Left colon (tissue), 2 donors: ENCODE measurements at regions of chr2 and their contacts with region 1.

Region 1: DNA sequence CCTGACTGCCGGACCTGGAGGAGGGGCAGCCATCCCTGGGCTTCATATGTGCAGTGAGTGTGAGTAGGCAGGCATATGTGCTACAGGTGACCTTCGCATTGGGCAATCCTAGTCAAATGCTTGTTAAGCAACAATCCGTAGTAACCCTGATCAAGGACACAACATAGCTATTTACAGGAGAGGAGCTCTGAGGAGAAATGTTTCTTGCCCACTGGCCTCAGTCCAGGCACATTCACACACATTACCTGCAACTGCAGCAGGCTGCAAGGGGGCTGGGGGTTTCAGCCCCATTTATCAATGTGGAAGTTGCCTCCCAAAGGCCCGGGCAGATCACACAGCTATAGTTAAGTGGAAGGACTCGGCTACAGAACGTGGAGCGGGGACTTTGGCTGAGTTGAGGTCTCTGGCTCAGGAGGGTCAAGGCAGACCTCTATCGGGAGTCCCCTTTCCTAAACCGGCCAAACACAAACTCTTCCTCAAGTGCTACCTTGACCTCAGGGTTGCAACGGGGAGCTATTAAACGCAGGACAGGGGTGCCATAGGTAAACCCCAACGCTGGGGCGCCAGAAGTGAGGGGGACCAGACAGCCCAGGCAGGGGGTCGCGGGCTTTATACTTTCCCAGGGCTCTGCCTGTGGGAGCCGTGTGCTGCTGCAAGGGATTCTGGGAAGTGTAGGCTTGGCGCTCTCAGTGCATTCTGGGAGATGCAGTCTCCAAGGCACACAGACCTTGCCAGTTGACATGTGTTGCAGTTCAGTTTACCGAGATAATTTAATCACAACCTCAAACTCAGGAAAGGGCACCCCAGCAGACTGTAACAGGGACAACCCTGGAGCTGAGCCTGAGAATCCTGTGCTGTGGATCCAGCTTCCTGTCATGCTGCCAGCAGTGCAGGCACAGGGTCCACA is 9.4 kb downstream of the KHK start:
- DNase-seq: peak in 1 of 2 donors; percentile 50
- ATAC-seq: peak; percentile 65

Region 2: GRCh38 chr2:27191053-27191829 is 95.2 kb after region 1 on chr2:
- intact Hi-C with region 1: loop called in 1 of 2 experiments (anchors 10 kb)
- DNase-seq: peak in 1 of 2 donors; percentile 41
- ATAC-seq: peak; percentile 58

Region 3: DNA sequence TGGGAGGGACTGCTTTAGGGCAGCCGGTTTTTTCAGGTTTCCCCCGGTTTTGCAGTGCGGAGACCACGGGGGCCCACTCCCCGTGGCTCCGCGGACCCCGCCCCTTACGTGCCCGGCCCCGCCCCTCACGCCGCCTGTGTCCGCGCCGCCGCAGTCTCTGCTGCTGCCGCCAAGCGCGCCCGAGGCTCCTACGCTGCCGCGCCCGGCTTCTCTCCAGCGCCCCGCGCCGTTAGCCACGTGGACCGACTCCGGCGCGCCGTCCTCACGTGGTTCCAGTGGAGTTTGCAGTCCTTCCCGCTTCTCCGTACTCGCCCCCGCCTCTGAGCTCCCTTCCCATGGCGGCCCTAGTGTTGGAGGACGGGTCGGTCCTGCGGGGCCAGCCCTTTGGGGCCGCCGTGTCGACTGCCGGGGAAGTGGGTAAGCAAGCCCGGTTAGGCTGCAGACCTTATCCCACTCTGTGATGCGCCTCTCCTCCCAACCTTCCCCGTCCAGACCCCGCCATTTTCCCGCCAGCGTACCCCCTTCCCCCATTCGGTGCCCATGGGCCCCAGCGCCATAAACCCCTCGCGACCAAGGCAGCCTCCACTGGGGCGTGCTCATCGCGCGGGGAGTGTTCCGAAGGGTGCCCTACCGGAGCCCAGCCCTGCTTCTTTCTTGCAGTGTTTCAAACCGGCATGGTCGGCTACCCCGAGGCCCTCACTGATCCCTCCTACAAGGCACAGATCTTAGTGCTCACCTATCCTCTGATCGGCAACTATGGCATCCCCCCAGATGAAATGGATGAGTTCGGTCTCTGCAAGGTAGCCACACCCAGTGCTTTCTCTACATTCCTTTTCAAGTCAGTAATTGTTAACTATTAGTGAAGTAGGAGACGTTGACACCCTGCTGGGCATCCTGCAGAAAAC is 121.5 kb after region 1 on chr2 and contains the start of gene CAD:
- intact Hi-C with region 1: no loop called
- DNase-seq: peak; percentile 84 to 93
- ATAC-seq: peak; percentile 92
- total RNA-seq, gene CAD: 13.9 to 23.7 TPM

Region 4: DNA sequence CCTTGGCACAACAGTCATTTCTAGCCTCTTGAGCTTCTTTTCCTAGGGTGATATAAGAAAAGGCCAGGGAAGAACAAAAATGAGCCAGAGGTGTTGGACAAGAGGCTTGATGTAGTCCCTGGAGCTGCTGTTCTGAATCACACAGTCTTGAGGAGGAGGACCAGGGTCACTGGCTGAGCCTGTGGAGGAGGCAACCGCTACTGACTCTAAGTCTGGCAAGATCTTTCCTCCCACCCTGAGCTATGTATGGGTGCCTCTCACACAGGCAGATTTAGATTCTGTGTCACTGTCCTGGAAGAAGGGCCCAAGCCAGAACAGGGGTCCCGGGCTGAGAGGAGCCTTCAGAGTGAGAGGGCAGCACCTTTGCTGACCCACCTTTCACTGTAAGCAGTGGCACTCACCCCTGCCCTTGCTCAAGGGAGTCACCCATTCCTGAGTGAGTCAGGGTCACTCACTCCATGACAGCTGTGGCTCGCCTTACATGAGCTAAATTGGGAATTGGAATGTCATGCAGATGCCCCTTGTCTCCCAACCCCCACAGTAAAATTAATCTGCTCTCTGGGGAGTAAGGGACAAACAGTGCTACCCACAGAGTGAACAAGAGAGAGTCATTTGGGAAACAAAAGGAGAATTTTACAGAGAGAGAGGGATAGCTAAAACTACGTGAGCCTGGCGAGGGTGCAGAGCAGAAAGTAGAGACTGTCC is 186.0 kb after region 1 on chr2 and contains the start of gene TRIM54:
- intact Hi-C with region 1: loop called (anchors 5 to 10 kb)
- DNase-seq: no peak
- ATAC-seq: no peak
- total RNA-seq, gene TRIM54: 0.14 TPM in 1 of 2 donors, not detected in the other